B cell (primary cell): ENCODE measurements at regions of chr3 and their contacts with region 1.

Region 1: DNA sequence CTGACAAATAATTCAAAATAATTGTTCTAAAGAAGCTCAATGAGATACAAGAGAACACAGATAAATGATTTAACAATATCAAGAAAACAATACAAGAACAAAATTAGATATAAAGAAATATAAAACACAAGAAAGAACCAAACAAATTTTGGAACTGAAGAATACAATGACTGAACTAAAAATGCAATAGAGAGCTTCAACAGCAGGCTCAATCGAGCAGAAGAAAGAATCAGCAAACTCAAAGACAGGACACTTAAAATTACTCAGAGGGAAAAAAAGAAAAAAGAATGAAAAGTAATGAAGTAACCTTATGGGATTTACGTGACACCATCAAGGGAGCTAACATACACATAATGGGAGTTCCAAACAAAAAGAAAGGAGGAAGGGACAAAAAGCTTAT is 32.1 kb downstream of the CCDC54 start:
- DNase-seq: no peak
- ATAC-seq: no peak
- H3K4me3 ChIP-seq: no peak overlapping the region
- H3K4me3 Mint-ChIP-seq: no peak overlapping the region
- H3K27ac ChIP-seq: no peak overlapping the region
- H3K27ac Mint-ChIP-seq: no peak overlapping the region
- H3K4me1 ChIP-seq: no peaks in the 10 kb centered on the region
- H3K4me1 Mint-ChIP-seq: peaks cover 5% of the 10 kb centered on the region
- H3K27me3 ChIP-seq: no peaks in the 10 kb centered on the region
- H3K27me3 Mint-ChIP-seq: no peaks in the 10 kb centered on the region
- CTCF ChIP-seq: no peak

Region 2: GRCh38 chr3:107421170-107421792 is 11.9 kb after region 1 on chr3:
- CTCF ChIA-PET with region 1: interaction called, 14 read pairs
- POLR2A ChIA-PET with region 1: no interaction called
- intact Hi-C with region 1: no loop called
- DNase-seq: peak; percentile 63
- ATAC-seq: peak; percentile 64
- H3K4me3 ChIP-seq: peak overlapping the region in 1 of 5 experiments; percentile 33
- H3K4me3 Mint-ChIP-seq: peak overlapping the region; percentile 75
- H3K27ac ChIP-seq: no peak overlapping the region
- H3K27ac Mint-ChIP-seq: no peak overlapping the region
- H3K4me1 ChIP-seq: peaks cover 10 to 13% of the 10 kb centered on the region in 2 donors
- H3K4me1 Mint-ChIP-seq: peaks cover 16% of the 10 kb centered on the region
- H3K27me3 ChIP-seq: no peaks in the 10 kb centered on the region
- H3K27me3 Mint-ChIP-seq: peaks cover 3% of the 10 kb centered on the region
- CTCF ChIP-seq: peak; percentile 74

Region 3: DNA sequence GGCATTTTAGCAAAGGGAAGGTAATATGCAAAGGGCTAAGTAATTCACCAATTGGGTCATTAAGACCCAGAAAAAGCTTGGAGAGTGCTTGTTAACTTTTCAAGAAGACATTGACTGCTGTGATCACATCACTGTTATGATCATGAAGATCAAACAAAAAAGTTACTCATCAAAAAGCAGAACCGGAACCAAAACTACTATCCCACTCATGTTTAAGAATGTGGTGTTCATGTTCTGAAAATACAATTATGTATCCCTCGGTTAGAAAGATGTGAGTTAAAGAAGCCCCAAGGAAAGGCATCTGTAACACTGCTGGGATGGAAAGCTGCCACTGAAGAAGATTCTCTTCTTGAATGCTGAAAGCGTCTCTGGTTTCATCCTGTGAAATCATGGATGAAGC is 146.0 kb after region 1 on chr3:
- CTCF ChIA-PET with region 1: no interaction called
- POLR2A ChIA-PET with region 1: no interaction called
- intact Hi-C with region 1: no loop called
- DNase-seq: no peak
- ATAC-seq: no peak
- H3K4me3 ChIP-seq: no peak overlapping the region
- H3K4me3 Mint-ChIP-seq: no peak overlapping the region
- H3K27ac ChIP-seq: no peak overlapping the region
- H3K27ac Mint-ChIP-seq: no peak overlapping the region
- H3K4me1 ChIP-seq: no peaks in the 10 kb centered on the region
- H3K4me1 Mint-ChIP-seq: peaks cover 39% of the 10 kb centered on the region
- H3K27me3 ChIP-seq: no peaks in the 10 kb centered on the region
- H3K27me3 Mint-ChIP-seq: no peaks in the 10 kb centered on the region
- CTCF ChIP-seq: no peak